ENCODE measurements at regions of chr17 and their contacts with region 1.

Region 1: GRCh38 chr17:50397111-50397918 is at the start of gene LRRC59:
- DNase-seq: peak; percentile 88 to 96 (median 92)
- H3K4me3 ChIP-seq: peak within 1 kb of the TSS; percentile 75 to 82
- H3K4me3 Mint-ChIP-seq: peak within 1 kb of the TSS; percentile 87 to 97 (median 92)
- H3K27ac ChIP-seq: peak within 1 kb of the TSS; percentile 85
- H3K27ac Mint-ChIP-seq: peak within 1 kb of the TSS; percentile 84 to 99 (median 95)
- H3K4me1 ChIP-seq: peaks cover 30% of the 10 kb centered on the region
- H3K4me1 Mint-ChIP-seq: peaks cover 23 to 47% (median 30%) of the 10 kb centered on the region in 4 donors
- H3K27me3 ChIP-seq: no peaks in the 10 kb centered on the region
- H3K27me3 Mint-ChIP-seq: no peaks in the 10 kb centered on the region
- total RNA-seq, gene LRRC59: 30.3 to 30.7 TPM

Region 2: DNA sequence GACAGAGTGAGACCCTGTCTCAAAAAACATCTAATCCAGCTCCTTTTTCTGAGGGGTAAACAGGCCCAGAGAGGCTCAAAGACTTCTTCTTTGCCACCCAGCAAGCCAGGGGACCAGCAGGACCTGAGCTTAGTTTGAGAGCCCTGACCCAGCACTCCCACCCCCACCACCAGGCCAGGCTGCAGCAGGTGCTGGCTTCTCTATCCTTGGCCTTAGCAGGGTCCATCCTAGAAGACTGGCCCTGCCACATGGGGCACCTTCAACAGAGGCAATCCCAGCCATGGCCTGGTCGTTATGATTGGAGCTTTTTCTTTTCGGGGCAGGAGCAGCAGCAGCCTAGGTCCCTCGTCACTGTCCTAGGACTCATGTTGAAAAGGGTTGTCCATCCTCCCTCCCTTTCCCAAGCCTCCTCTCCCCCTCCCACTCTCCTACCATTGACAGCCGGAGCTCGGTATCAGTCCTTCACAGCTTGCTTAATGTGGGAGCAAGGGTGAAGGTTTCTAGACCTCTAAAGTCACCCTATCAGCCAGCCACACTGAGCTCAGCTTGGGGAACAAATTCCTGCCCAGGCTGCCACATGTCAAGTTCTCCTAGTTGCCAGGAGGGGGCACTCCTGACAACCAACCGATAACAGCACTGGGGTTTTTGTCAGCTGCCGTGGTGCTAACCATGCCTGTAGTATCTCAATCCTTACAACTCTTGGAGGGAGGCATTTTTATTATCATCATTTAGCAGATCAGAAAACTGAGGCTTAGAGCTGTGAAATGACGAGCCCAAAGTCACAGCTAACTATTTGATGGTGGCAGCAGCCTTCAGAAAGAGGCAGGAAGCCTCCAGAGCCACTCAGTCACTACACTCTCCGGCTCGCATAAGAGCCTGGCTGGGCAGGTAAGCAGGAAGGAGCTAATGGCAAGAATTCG is 35.5 kb before region 1 on chr17:
- CTCF ChIA-PET with region 1: interaction called, 77 read pairs
- POLR2A ChIA-PET with region 1: interaction called, 20 read pairs
- intact Hi-C with region 1: loop called (anchors 1 kb)
- DNase-seq: peak; percentile 55 to 69 (median 62)
- H3K4me3 ChIP-seq: no peak overlapping the region
- H3K4me3 Mint-ChIP-seq: peak overlapping the region in 7 of 8 donors; percentile 2 to 77 (median 57)
- H3K27ac ChIP-seq: peak overlapping the region; percentile 9
- H3K27ac Mint-ChIP-seq: peak overlapping the region; percentile 73 to 91 (median 87)
- H3K4me1 ChIP-seq: peaks cover 7% of the 10 kb centered on the region
- H3K4me1 Mint-ChIP-seq: peaks cover 8 to 10% (median 9%) of the 10 kb centered on the region in 4 donors
- H3K27me3 ChIP-seq: no peaks in the 10 kb centered on the region
- H3K27me3 Mint-ChIP-seq: no peaks in the 10 kb centered on the region

Region 3: GRCh38 chr17:50372758-50373556 is 24.4 kb before region 1 on chr17 and contains the starts of genes EME1 and MRPL27:
- CTCF ChIA-PET with region 1: interaction called, 52 read pairs
- POLR2A ChIA-PET with region 1: interaction called, 44 read pairs
- intact Hi-C with region 1: loop called (anchors 2 kb)
- DNase-seq: peak; percentile 90 to 94 (median 90)
- H3K4me3 ChIP-seq: peak within 1 kb of the TSS; percentile 96 to 100
- H3K4me3 Mint-ChIP-seq: peak within 1 kb of the TSS; percentile 99 to 100 (median 100)
- H3K27ac ChIP-seq: peak within 1 kb of the TSS; percentile 98
- H3K27ac Mint-ChIP-seq: peak within 1 kb of the TSS; percentile 95 to 100 (median 100)
- H3K4me1 ChIP-seq: peaks cover 16% of the 10 kb centered on the region
- H3K4me1 Mint-ChIP-seq: peaks cover 15 to 29% (median 20%) of the 10 kb centered on the region in 4 donors
- H3K27me3 ChIP-seq: no peaks in the 10 kb centered on the region
- H3K27me3 Mint-ChIP-seq: no peaks in the 10 kb centered on the region
- total RNA-seq, gene EME1: 0.41 to 0.89 TPM
- total RNA-seq, gene MRPL27: 30.0 to 32.9 TPM

Region 4: DNA sequence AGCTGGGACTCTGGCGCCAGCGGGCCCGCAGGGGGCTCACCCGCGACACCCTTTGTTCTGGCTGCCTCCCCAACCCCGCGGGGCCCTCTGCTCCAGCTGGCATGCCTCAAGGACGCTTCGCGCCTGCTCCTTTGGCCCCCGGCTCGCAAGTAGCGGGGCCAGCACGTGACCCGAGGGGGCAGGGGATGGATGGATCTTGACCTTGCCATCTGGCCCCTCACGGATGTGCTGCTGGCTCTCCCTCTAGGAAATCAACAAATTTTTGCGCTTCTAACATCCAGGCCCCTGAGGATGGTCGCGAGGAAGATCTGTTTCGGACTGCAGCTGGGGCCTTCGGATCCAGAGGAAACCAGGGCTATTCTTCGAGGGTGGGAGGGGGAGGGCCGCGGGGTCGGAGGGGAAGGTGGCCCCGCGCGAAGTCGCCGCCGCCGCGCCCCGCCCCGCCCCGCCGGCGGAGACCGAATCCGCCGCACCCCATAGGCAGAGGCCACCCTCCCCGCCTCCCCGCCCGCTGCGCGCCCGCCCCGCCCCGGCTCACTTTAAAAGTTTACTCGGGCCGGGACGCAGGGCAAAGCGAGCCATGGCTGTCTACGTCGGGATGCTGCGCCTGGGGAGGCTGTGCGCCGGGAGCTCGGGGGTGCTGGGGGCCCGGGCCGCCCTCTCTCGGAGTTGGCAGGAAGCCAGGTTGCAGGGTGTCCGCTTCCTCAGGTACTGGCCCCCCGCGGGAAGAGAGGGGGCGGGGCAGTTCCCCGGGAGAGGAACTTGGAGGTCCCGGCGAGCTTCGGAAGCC is 28.6 kb after region 1 on chr17 and contains the start of gene ACSF2:
- CTCF ChIA-PET with region 1: interaction called, 35 read pairs
- POLR2A ChIA-PET with region 1: interaction called, 22 read pairs
- intact Hi-C with region 1: loop called (anchors 1 kb)
- DNase-seq: peak; percentile 51 to 74 (median 63)
- H3K4me3 ChIP-seq: peak within 1 kb of the TSS; percentile 17 to 69
- H3K4me3 Mint-ChIP-seq: peak within 1 kb of the TSS; percentile 77 to 93 (median 88)
- H3K27ac ChIP-seq: peak within 1 kb of the TSS; percentile 62
- H3K27ac Mint-ChIP-seq: peak within 1 kb of the TSS; percentile 72 to 93 (median 89)
- H3K4me1 ChIP-seq: peaks cover 32% of the 10 kb centered on the region
- H3K4me1 Mint-ChIP-seq: peaks cover 19 to 45% (median 32%) of the 10 kb centered on the region in 4 donors
- H3K27me3 ChIP-seq: no peaks in the 10 kb centered on the region
- H3K27me3 Mint-ChIP-seq: no peaks in the 10 kb centered on the region
- total RNA-seq, gene ACSF2: 20.8 to 24.8 TPM

Region 5: DNA sequence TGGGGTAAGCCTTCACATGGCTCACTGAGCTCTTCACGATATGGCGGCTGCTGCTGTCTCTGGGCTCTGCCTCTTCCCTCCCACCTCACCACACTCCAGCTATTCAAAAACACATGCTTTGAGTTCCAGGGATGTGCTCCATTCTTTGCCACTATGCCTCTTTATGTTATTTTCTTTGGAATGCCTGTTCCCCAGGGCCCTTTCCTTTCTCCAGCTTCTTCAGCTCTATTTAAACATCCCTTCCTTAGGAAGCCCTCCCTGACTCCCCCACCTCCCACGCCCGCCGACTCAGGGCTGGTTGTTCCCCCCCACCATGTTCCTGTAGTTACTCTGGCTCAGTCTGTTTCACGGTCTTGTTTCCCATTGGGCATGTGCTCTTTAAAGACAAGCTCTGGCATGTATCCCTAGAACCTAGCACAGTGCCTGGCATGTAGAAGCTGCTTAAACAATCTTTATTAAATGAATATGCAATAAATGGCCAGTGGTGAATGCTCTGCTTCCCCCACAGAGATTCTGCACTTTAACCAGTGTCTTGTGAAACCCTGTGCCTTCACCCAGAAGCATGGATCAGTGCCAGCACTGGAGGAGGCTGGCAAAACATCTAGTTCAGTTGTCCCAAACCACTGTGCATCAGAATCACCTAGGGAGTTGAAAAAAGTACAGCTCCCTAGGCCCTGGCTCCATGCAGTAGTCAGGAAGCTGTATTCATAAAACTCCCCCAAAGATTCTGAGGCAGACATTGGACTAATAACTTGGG is 117.8 kb after region 1 on chr17:
- CTCF ChIA-PET with region 1: no interaction called
- POLR2A ChIA-PET with region 1: no interaction called
- intact Hi-C with region 1: no loop called
- DNase-seq: no peak
- H3K4me3 ChIP-seq: no peak overlapping the region
- H3K4me3 Mint-ChIP-seq: no peak overlapping the region
- H3K27ac ChIP-seq: no peak overlapping the region
- H3K27ac Mint-ChIP-seq: no peak overlapping the region
- H3K4me1 ChIP-seq: peaks cover 30% of the 10 kb centered on the region
- H3K4me1 Mint-ChIP-seq: peaks cover 18 to 39% (median 27%) of the 10 kb centered on the region in 4 donors
- H3K27me3 ChIP-seq: no peaks in the 10 kb centered on the region
- H3K27me3 Mint-ChIP-seq: no peaks in the 10 kb centered on the region

Measured in CD4-positive, alpha-beta memory T cell (primary cell).